PC-9 (cell line): ENCODE measurements at regions of chr3 and their contacts with region 1.

Region 1: GRCh38 chr3:185942907-185943759 is 5.3 kb upstream of the TRA2B start:
- DNase-seq: peak; percentile 86 to 93
- H3K4me3 ChIP-seq: no peak overlapping the region; the same call in 1 of the 2 replicates
- H3K27ac ChIP-seq: no peak overlapping the region
- H3K4me1 ChIP-seq: peaks cover 48% of the 10 kb centered on the region
- H3K27me3 ChIP-seq: no peaks in the 10 kb centered on the region
- CTCF ChIP-seq: peak; percentile 100

Region 2: GRCh38 chr3:185605566-185605965 is 337.6 kb before region 1 on chr3:
- CTCF ChIA-PET with region 1: interaction called, 23 read pairs
- POLR2A ChIA-PET with region 1: no interaction called
- intact Hi-C with region 1: no loop called
- DNase-seq: no peak
- H3K4me3 ChIP-seq: no peak overlapping the region
- H3K27ac ChIP-seq: no peak overlapping the region
- H3K4me1 ChIP-seq: no peaks in the 10 kb centered on the region
- H3K27me3 ChIP-seq: no peaks in the 10 kb centered on the region
- CTCF ChIP-seq: no peak

Region 3: DNA sequence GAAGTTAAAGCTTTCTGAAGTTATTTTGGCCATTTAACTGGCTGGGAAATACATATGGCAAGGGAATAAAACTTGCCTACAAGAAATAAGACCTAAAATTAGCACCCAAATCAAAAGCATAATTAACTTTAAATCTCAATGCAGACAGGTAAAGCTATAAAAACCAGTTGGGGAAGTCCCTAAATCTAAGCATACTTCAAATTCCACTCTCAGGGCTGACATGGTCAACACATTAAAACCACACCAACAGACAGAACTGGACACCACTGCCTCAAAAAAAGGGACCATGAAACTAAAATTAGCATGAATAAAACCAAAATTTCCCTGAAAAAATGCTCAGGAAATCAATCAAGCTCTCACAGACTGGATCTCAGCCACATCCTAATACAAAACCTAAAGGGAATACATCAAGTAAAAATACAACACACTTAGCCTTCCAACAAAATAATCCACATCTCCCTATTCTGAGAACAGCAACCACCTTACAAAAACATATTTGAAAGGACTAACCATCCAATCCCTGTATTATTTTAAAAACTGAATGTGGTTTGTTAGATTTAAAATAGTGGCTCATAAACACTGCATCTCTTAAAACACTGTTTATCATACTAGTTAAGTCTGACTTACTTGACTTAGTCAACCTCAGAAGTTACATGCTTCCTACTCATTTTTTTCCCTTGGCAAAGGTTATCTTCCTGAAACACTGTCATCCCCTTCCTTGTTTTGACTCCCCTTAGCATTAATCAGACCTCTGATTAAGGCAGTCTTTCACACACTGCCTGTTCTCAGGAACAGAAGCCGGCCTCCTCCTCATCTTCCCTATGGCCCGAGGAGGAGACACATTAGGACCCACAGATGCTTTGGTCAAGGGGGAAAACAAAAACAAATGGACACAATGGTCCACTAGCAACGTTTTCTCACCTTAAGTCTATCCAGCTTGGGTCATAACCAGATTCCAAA is 13.7 kb before region 1 on chr3:
- CTCF ChIA-PET with region 1: interaction called, 11 read pairs
- POLR2A ChIA-PET with region 1: interaction called, 4 read pairs
- intact Hi-C with region 1: no loop called
- DNase-seq: peak in 1 of 2 experiments; percentile 74
- H3K4me3 ChIP-seq: peak overlapping the region; percentile 2; the same call in 1 of the 2 replicates
- H3K27ac ChIP-seq: peak overlapping the region; percentile 30
- H3K4me1 ChIP-seq: peaks cover 74% of the 10 kb centered on the region
- H3K27me3 ChIP-seq: no peaks in the 10 kb centered on the region
- CTCF ChIP-seq: no peak

Region 4: DNA sequence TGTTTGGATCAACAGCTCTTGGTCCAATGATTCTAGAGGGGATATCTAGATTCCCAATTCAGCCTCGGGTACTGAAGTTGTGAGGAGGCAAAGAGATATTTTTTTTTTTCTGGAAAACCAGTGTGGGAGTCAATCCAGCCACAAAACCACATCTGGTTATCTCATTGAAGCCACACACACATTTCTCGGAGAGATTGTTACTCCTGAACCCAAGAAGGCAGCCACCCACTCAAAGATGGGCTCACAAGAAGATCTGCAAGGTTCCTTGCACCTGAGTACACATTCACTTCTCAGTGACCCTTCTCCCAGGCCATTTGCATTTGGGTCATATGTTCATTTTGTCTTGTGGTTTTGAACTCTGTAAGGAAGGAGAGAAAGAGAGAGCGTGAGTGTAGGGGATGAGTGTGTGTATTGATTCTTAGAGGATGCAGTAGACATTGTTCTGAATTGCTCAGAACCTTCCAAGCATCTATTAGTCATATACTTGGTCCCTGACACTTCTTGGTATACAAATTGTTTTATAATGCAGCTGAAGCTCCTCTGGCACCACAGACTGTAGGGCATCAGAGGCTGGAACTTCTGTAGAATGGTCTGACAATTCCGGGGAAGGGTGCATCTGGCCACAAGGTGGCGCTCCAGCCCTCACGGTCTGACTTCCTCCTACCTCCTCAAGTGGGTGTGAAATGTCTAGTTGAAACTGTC is 34.0 kb after region 1 on chr3:
- CTCF ChIA-PET with region 1: interaction called, 15 read pairs
- POLR2A ChIA-PET with region 1: interaction called, 8 read pairs
- intact Hi-C with region 1: loop called (anchors 2 kb)
- DNase-seq: peak; percentile 59 to 81
- H3K4me3 ChIP-seq: no peak overlapping the region
- H3K27ac ChIP-seq: no peak overlapping the region
- H3K4me1 ChIP-seq: no peaks in the 10 kb centered on the region
- H3K27me3 ChIP-seq: no peaks in the 10 kb centered on the region
- CTCF ChIP-seq: peak; percentile 98

Region 5: DNA sequence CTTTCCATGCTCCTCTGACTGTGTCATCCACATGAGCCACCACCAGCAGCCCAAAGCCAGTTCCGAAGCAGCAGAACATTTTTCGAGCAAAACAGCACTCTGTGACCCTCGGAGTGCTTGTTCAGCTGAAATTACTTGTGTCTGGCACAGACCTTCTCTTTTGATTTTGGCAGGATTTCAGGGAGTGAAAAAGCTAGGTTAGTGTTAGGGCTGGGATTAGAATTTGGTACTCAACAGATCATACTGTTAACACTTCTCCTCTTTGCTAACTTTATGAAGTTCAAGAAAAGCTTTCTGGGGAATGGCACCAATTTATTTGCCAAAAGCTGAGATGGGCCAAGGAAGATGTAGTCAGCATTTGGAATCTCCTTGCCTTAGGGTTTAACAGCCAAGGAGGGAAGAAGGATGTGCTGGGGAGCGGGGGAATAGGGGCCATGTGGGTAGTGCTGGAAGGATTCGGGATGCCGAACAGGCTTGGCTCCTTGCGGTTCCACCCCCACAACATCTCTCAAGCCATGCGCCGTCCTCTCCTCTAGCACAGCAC is 49.8 kb after region 1 on chr3:
- CTCF ChIA-PET with region 1: no interaction called
- POLR2A ChIA-PET with region 1: no interaction called
- intact Hi-C with region 1: no loop called
- DNase-seq: no peak
- H3K4me3 ChIP-seq: no peak overlapping the region
- H3K27ac ChIP-seq: no peak overlapping the region
- H3K4me1 ChIP-seq: no peaks in the 10 kb centered on the region
- H3K27me3 ChIP-seq: no peaks in the 10 kb centered on the region
- CTCF ChIP-seq: no peak

Region 6: DNA sequence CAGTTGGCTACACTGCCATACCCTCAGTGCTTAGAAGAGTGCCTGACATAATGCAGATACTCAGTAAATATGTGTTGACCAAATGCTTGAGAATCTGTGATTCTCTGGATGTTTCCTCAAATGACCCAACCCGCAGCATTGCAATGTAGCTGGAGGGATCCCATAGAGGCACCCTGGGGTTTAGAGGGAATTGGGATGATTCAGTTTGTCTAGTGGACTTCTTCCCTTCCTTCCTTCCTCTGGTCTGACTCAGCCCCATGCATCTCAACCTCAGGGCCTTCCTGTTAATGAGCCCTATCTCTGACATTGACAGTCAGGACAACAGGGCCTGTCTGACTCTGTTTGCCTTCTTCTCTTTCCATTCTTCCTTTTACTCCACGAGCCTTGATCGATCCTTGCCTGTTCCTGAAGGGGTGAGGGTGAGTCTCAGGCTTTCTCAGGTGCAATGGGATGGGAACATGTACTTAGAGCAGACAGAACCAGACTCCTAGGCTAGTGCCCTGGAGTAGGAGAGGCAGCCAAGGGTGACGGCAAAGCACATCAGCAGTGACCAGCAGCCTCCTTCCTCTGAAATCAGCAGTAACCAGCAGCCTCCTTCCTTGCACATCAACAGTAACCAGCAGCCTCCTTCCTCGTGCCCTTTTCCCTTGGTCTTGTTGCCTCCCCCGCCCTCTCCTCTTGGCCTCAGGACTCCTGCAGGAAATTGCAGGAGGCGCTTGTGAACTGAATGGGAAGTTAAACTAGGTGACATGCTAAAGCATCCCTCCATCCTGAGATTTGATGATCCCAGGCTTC is 340.7 kb after region 1 on chr3:
- CTCF ChIA-PET with region 1: no interaction called
- POLR2A ChIA-PET with region 1: no interaction called
- intact Hi-C with region 1: no loop called
- DNase-seq: no peak
- H3K4me3 ChIP-seq: no peak overlapping the region
- H3K27ac ChIP-seq: no peak overlapping the region
- H3K4me1 ChIP-seq: no peaks in the 10 kb centered on the region
- H3K27me3 ChIP-seq: peaks cover 92% of the 10 kb centered on the region
- CTCF ChIP-seq: no peak

Region 7: GRCh38 chr3:186821429-186822367 is 878.6 kb after region 1 on chr3:
- CTCF ChIA-PET with region 1: no interaction called
- POLR2A ChIA-PET with region 1: no interaction called
- intact Hi-C with region 1: loop called (anchors 5 kb)
- DNase-seq: no peak
- H3K4me3 ChIP-seq: no peak overlapping the region
- H3K27ac ChIP-seq: no peak overlapping the region
- H3K4me1 ChIP-seq: peaks cover 9% of the 10 kb centered on the region
- H3K27me3 ChIP-seq: no peaks in the 10 kb centered on the region
- CTCF ChIP-seq: peak; percentile 92